AG04449 (cell line): ENCODE measurements at regions of chr17 and their contacts with region 1.

Region 1: GRCh38 chr17:42405963-42406495 is 17.0 kb downstream of the CAVIN1 start:
- DNase-seq: no peak
- H3K4me3 ChIP-seq: no peak overlapping the region
- CTCF ChIP-seq: peak; percentile 72

Region 2: DNA sequence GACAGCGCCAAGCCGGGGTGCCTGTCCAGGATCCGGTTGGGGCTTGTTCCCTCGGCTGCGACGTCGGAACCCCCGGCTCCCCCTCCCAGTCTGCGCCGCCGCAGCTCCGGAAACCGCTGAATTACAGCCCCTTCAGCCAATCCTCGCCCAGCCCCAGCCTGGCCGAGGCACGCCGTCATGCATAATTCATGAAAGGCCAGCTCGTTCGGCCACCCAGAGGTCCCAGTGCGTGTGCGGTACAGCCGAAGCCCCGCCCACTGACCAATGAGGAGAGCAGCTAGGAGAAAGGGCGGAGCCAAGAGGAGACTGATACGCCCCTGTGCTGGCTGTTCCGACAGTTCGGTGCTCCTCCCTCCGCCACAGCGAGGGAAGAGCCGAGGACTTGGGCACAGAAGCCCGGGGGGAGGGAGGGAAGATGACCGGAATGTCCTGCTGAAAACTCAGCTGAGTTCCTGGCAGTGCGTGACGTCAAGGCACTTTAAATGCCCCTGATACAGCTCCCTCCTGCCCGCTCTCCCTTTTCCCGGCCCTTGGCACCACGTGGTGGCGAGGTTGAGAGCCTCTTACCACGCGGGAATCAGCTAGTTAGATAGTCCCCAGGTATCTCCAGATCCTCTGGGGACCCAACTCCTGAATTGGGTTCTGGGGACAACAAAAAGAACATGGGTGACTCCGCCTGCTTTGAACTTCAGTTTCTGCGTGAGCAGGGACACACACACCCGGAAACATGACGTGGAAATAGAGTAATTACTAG is 17.5 kb before region 1 on chr17 and contains the start of gene STAT3:
- CTCF ChIA-PET with region 1: interaction called, 11 read pairs
- POLR2A ChIA-PET with region 1: interaction called, 4 read pairs
- DNase-seq: peak; percentile 98
- H3K4me3 ChIP-seq: peak within 1 kb of the TSS; percentile 96
- CTCF ChIP-seq: no peak

Region 3: GRCh38 chr17:42422958-42423712 is 17.1 kb after region 1 on chr17 and contains the start of gene CAVIN1:
- CTCF ChIA-PET with region 1: interaction called, 11 read pairs
- POLR2A ChIA-PET with region 1: interaction called, 60 read pairs
- DNase-seq: peak; percentile 92
- H3K4me3 ChIP-seq: peak within 1 kb of the TSS; percentile 100
- CTCF ChIP-seq: no peak

Region 4: DNA sequence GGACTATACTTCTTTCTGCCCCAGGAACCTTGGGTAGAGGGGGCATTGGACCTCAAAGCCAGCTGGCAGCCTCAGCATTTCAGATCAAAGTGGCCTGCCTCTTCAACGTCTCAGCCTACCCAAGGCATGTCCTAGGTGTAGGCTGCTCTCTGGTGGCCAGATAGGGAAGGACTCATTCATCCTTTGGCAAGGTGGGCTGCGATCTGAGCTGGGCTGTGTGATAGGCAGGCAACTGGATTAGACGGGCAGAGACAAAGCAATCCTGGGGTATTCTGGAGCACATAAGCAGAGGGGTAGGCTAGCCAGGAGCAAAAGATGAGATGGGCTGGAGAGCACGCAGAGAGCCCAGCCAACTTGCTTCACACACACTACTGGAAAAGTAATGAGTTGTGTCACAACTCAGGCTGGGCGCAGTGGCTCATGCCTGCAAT is 121.3 kb after region 1 on chr17:
- CTCF ChIA-PET with region 1: interaction called, 10 read pairs
- POLR2A ChIA-PET with region 1: interaction called, 5 read pairs
- DNase-seq: no peak
- H3K4me3 ChIP-seq: no peak overlapping the region
- CTCF ChIP-seq: peak; percentile 91